Naive thymus-derived CD4-positive, alpha-beta T cell (primary cell): ENCODE measurements at regions of chr6 and their contacts with region 1.

Region 1: DNA sequence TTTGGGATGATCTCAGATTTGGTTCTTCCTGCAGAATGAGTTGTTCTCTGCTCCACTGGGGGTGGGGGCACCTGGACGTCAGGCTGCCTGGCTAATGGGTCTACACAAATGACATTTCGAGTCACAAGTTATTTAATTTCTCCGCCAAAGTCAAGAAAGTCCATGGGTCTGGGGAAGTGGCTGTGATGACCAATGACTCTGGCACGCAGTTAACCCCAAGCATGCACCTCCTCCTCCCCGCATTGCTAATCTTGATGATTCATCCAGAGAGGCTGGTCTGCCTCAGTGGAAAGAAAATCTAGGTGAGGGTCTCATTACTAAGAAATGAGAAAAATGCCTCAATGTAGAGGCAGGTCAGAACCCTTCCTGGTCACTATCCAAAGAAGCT is 98.3 kb upstream of the MRPS10 start:
- DNase-seq: no peak
- ATAC-seq: peak; percentile 77
- H3K4me3 ChIP-seq: no peak overlapping the region
- H3K4me3 Mint-ChIP-seq: no peak overlapping the region
- H3K27ac ChIP-seq: no peak overlapping the region
- H3K27ac Mint-ChIP-seq: peak overlapping the region in 4 of 9 donors; percentile 24 to 67 (median 37)
- H3K4me1 ChIP-seq: peaks cover 0 to 21% of the 10 kb centered on the region in 2 donors
- H3K4me1 Mint-ChIP-seq: peaks cover 32 to 66% (median 57%) of the 10 kb centered on the region in 7 donors
- H3K27me3 ChIP-seq: no peaks in the 10 kb centered on the region
- H3K27me3 Mint-ChIP-seq: no peaks in the 10 kb centered on the region

Region 2: DNA sequence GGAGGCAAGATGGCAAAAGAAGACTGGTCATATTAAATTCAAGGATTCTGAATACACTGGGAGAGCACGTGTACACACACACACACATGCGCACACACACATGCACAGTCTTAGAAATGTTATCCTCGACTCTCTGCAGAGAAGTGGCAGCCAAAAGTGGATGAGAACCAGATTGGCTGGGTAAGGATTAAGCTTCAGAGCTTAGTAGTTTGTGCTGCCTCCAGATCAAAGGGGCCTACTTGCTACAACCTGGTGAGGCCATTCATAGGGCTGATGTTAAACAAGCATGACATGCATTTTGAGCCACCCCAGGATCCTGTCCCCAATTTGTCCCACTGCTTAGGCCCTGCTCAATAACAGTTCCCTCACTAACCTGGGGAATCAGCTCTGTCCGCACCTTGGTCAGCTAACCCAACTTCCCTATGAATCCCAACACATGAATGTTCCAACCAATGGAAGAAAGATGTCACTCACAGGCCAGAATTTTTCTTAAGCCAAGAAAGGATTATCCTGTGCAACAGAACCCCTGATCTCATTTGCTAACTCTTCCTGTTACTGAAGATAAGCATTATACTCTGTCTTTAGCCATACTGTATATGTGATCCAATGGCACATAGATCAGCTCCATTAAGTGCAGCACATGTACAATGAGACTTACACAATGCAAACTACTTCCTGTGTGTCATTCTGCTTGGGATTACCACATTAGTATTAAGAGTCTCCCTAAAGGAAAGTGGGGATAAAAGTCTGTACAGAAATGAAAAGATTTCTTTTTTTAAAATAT is 497.5 kb before region 1 on chr6:
- CTCF ChIA-PET with region 1: no interaction called
- POLR2A ChIA-PET with region 1: no interaction called
- intact Hi-C with region 1: no loop called
- DNase-seq: no peak
- ATAC-seq: no peak
- H3K4me3 ChIP-seq: no peak overlapping the region
- H3K4me3 Mint-ChIP-seq: no peak overlapping the region
- H3K27ac ChIP-seq: no peak overlapping the region
- H3K27ac Mint-ChIP-seq: no peak overlapping the region
- H3K4me1 ChIP-seq: no peaks in the 10 kb centered on the region
- H3K4me1 Mint-ChIP-seq: peaks cover 0 to 5% (median 2%) of the 10 kb centered on the region in 7 donors
- H3K27me3 ChIP-seq: no peaks in the 10 kb centered on the region
- H3K27me3 Mint-ChIP-seq: no peaks in the 10 kb centered on the region

Region 3: GRCh38 chr6:41887331-41887751 is 428.6 kb before region 1 on chr6:
- CTCF ChIA-PET with region 1: no interaction called
- POLR2A ChIA-PET with region 1: no interaction called
- intact Hi-C with region 1: no loop called
- DNase-seq: no peak
- ATAC-seq: no peak
- H3K4me3 ChIP-seq: no peak overlapping the region
- H3K4me3 Mint-ChIP-seq: no peak overlapping the region
- H3K27ac ChIP-seq: no peak overlapping the region
- H3K27ac Mint-ChIP-seq: no peak overlapping the region
- H3K4me1 ChIP-seq: no peaks in the 10 kb centered on the region
- H3K4me1 Mint-ChIP-seq: peaks cover 0 to 4% (median 0%) of the 10 kb centered on the region in 7 donors
- H3K27me3 ChIP-seq: no peaks in the 10 kb centered on the region
- H3K27me3 Mint-ChIP-seq: peaks cover 0 to 5% (median 0%) of the 10 kb centered on the region in 5 donors

Region 4: GRCh38 chr6:42210551-42210950 is 105.4 kb before region 1 on chr6:
- CTCF ChIA-PET with region 1: no interaction called
- POLR2A ChIA-PET with region 1: no interaction called
- intact Hi-C with region 1: no loop called
- DNase-seq: no peak
- ATAC-seq: no peak
- H3K4me3 ChIP-seq: no peak overlapping the region
- H3K4me3 Mint-ChIP-seq: no peak overlapping the region
- H3K27ac ChIP-seq: no peak overlapping the region
- H3K27ac Mint-ChIP-seq: no peak overlapping the region
- H3K4me1 ChIP-seq: no peaks in the 10 kb centered on the region
- H3K4me1 Mint-ChIP-seq: peaks cover 5 to 18% (median 10%) of the 10 kb centered on the region in 7 donors
- H3K27me3 ChIP-seq: no peaks in the 10 kb centered on the region
- H3K27me3 Mint-ChIP-seq: no peaks in the 10 kb centered on the region

Region 5: GRCh38 chr6:42352856-42353564 is 37.0 kb after region 1 on chr6:
- CTCF ChIA-PET with region 1: no interaction called
- POLR2A ChIA-PET with region 1: no interaction called
- intact Hi-C with region 1: loop called in 1 of 2 experiments (anchors 5 kb)
- DNase-seq: no peak
- ATAC-seq: no peak
- H3K4me3 ChIP-seq: no peak overlapping the region
- H3K4me3 Mint-ChIP-seq: no peak overlapping the region
- H3K27ac ChIP-seq: no peak overlapping the region
- H3K27ac Mint-ChIP-seq: no peak overlapping the region
- H3K4me1 ChIP-seq: peaks cover 0 to 8% of the 10 kb centered on the region in 2 donors
- H3K4me1 Mint-ChIP-seq: peaks cover 5 to 18% (median 10%) of the 10 kb centered on the region in 7 donors
- H3K27me3 ChIP-seq: no peaks in the 10 kb centered on the region
- H3K27me3 Mint-ChIP-seq: no peaks in the 10 kb centered on the region